PC-9 (cell line): ENCODE measurements at regions of chr15 and their contacts with region 1.

Region 1: GRCh38 chr15:75647370-75648155 is at the start of gene SNX33:
- DNase-seq: peak; percentile 58 to 82
- H3K4me3 ChIP-seq: peak within 1 kb of the TSS; percentile 86
- H3K27ac ChIP-seq: peak within 1 kb of the TSS; percentile 46
- H3K4me1 ChIP-seq: peaks cover 58% of the 10 kb centered on the region
- H3K27me3 ChIP-seq: no peaks in the 10 kb centered on the region
- CTCF ChIP-seq: peak; percentile 60
- total RNA-seq, gene SNX33: 27.8 and 27.9 TPM in 2 replicates

Region 2: DNA sequence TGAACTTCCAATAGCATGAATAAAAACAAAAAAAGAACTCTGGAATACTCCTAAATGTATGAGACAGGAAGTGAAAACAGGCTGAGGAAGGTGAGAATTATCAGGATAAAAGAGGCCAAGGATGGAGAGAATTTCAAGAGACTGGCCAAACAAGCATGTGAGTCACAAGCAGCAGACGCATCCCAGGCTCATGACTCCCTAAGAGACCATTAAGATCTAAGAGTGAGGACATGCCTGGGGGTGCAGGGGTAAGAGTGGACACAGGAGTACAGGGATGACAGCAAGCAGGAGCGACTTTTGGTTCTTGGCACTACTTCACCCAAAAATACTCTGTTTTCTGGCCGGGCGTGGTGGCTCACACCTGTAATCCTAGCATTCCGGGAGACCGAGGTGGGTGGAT is 781.5 kb before region 1 on chr15:
- CTCF ChIA-PET with region 1: no interaction called
- POLR2A ChIA-PET with region 1: interaction called, 40 read pairs
- intact Hi-C with region 1: no loop called
- DNase-seq: peak; percentile 46 to 71
- H3K4me3 ChIP-seq: no peak overlapping the region
- H3K27ac ChIP-seq: peak overlapping the region; percentile 49; the same call in 1 of the 2 replicates
- H3K4me1 ChIP-seq: peaks cover 67% of the 10 kb centered on the region
- H3K27me3 ChIP-seq: no peaks in the 10 kb centered on the region
- CTCF ChIP-seq: no peak

Region 3: GRCh38 chr15:75493732-75494131 is 153.8 kb before region 1 on chr15:
- CTCF ChIA-PET with region 1: no interaction called
- POLR2A ChIA-PET with region 1: interaction called, 20 read pairs
- intact Hi-C with region 1: no loop called
- DNase-seq: no peak
- H3K4me3 ChIP-seq: no peak overlapping the region
- H3K27ac ChIP-seq: no peak overlapping the region
- H3K4me1 ChIP-seq: no peaks in the 10 kb centered on the region
- H3K27me3 ChIP-seq: no peaks in the 10 kb centered on the region
- CTCF ChIP-seq: no peak

Region 4: GRCh38 chr15:75661091-75661777 is 13.7 kb after region 1 on chr15:
- CTCF ChIA-PET with region 1: interaction called, 4 read pairs
- POLR2A ChIA-PET with region 1: interaction called, 3 read pairs
- intact Hi-C with region 1: loop called (anchors 1 kb)
- DNase-seq: peak; percentile 82 to 91
- H3K4me3 ChIP-seq: peak overlapping the region; percentile 23; the same call in 1 of the 2 replicates
- H3K27ac ChIP-seq: peak overlapping the region; percentile 85
- H3K4me1 ChIP-seq: peaks cover 61% of the 10 kb centered on the region
- H3K27me3 ChIP-seq: no peaks in the 10 kb centered on the region
- CTCF ChIP-seq: no peak